ENCODE measurements at regions of chr13 and their contacts with region 1.

Region 1: GRCh38 chr13:44435142-44435982 is 61.7 kb downstream of the SERP2 start:
- DNase-seq: peak; percentile 99
- H3K4me3 Mint-ChIP-seq: peak overlapping the region; percentile 92
- H3K27ac Mint-ChIP-seq: peak overlapping the region; percentile 96
- H3K4me1 Mint-ChIP-seq: peaks cover 41% of the 10 kb centered on the region
- H3K27me3 Mint-ChIP-seq: no peaks in the 10 kb centered on the region
- CTCF ChIP-seq: no peak

Region 2: DNA sequence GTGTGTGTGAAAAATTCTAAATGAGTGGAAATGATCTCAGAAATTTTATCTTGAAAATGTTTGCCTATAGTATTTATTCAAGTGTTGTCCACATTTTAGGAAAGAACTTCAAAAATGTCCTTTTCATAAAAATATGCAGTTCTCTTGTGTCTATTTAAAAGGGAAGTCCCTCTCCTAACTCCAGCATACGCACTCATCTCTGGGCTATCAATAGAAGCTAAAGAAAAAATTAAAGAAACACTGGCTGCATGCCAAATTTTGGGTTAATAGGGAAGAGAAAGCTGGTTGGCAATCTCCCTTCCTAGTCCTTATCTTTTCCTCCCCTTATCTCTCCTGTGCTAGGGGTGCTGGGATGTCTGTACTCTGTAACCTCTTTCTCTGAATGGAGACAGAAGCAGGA is 961.9 kb before region 1 on chr13:
- CTCF ChIA-PET with region 1: no interaction called
- POLR2A ChIA-PET with region 1: no interaction called
- intact Hi-C with region 1: no loop called
- DNase-seq: no peak
- H3K4me3 Mint-ChIP-seq: no peak overlapping the region
- H3K27ac Mint-ChIP-seq: no peak overlapping the region
- H3K4me1 Mint-ChIP-seq: no peaks in the 10 kb centered on the region
- H3K27me3 Mint-ChIP-seq: no peaks in the 10 kb centered on the region
- CTCF ChIP-seq: no peak

Region 3: GRCh38 chr13:44108331-44108858 is 327.0 kb before region 1 on chr13:
- CTCF ChIA-PET with region 1: no interaction called
- POLR2A ChIA-PET with region 1: interaction called, 23 read pairs
- intact Hi-C with region 1: no loop called
- DNase-seq: peak; percentile 51
- H3K4me3 Mint-ChIP-seq: no peak overlapping the region
- H3K27ac Mint-ChIP-seq: no peak overlapping the region
- H3K4me1 Mint-ChIP-seq: peaks cover 9% of the 10 kb centered on the region
- H3K27me3 Mint-ChIP-seq: no peaks in the 10 kb centered on the region
- CTCF ChIP-seq: no peak

Region 4: GRCh38 chr13:44191504-44192171 is 243.7 kb before region 1 on chr13:
- CTCF ChIA-PET with region 1: interaction called, 4 read pairs
- POLR2A ChIA-PET with region 1: interaction called, 20 read pairs
- intact Hi-C with region 1: loop called (anchors 1 kb)
- DNase-seq: peak; percentile 77
- H3K4me3 Mint-ChIP-seq: no peak overlapping the region
- H3K27ac Mint-ChIP-seq: peak overlapping the region; percentile 85
- H3K4me1 Mint-ChIP-seq: peaks cover 31% of the 10 kb centered on the region
- H3K27me3 Mint-ChIP-seq: no peaks in the 10 kb centered on the region
- CTCF ChIP-seq: peak; percentile 49

Region 5: DNA sequence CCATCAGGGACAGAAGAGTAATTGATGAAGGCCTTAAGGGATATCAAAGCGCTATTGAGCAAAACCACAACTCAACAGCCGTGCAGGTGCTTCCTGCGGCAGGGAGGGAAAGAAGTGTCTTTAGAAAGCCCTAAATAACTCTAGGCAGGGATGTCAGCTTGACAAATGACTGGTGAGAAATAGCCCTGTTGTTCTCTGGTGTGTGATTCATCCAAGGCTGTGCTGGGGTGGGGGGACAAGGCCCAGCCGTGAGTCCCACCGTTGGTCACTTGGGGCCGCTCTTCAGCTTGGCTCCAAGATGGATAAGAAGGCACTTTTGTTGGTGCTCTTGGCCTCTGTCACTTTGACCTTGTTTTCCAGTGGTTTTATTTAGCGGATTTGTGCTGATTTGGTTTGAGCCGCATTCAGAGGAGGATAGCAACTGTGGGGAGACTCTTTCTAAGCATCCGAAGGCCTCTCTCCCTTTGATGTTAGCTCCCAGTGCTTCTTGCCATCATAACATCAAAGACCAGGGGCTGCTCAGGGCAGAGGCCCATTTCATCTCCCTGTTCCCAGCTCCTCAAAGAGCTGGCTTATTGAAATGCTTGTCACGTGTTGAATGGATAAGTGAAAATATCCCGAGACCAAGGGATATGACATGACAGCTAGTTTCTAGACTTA is 192.0 kb before region 1 on chr13:
- CTCF ChIA-PET with region 1: interaction called, 25 read pairs
- POLR2A ChIA-PET with region 1: interaction called, 127 read pairs
- intact Hi-C with region 1: loop called (anchors 1 kb)
- DNase-seq: peak; percentile 97
- H3K4me3 Mint-ChIP-seq: no peak overlapping the region
- H3K27ac Mint-ChIP-seq: peak overlapping the region; percentile 81
- H3K4me1 Mint-ChIP-seq: peaks cover 29% of the 10 kb centered on the region
- H3K27me3 Mint-ChIP-seq: no peaks in the 10 kb centered on the region
- CTCF ChIP-seq: peak; percentile 71

Region 6: GRCh38 chr13:44306401-44307192 is 128.8 kb before region 1 on chr13:
- CTCF ChIA-PET with region 1: interaction called, 15 read pairs
- POLR2A ChIA-PET with region 1: interaction called, 341 read pairs
- intact Hi-C with region 1: no loop called
- DNase-seq: peak; percentile 99
- H3K4me3 Mint-ChIP-seq: peak overlapping the region; percentile 51
- H3K27ac Mint-ChIP-seq: peak overlapping the region; percentile 93
- H3K4me1 Mint-ChIP-seq: peaks cover 79% of the 10 kb centered on the region
- H3K27me3 Mint-ChIP-seq: no peaks in the 10 kb centered on the region
- CTCF ChIP-seq: no peak

Region 7: GRCh38 chr13:44470638-44471562 is 35.5 kb after region 1 on chr13:
- CTCF ChIA-PET with region 1: interaction called, 7 read pairs
- POLR2A ChIA-PET with region 1: interaction called, 6 read pairs
- intact Hi-C with region 1: loop called (anchors 2 kb)
- DNase-seq: peak; percentile 50
- H3K4me3 Mint-ChIP-seq: no peak overlapping the region
- H3K27ac Mint-ChIP-seq: no peak overlapping the region
- H3K4me1 Mint-ChIP-seq: peaks cover 6% of the 10 kb centered on the region
- H3K27me3 Mint-ChIP-seq: no peaks in the 10 kb centered on the region
- CTCF ChIP-seq: peak; percentile 58

Region 8: DNA sequence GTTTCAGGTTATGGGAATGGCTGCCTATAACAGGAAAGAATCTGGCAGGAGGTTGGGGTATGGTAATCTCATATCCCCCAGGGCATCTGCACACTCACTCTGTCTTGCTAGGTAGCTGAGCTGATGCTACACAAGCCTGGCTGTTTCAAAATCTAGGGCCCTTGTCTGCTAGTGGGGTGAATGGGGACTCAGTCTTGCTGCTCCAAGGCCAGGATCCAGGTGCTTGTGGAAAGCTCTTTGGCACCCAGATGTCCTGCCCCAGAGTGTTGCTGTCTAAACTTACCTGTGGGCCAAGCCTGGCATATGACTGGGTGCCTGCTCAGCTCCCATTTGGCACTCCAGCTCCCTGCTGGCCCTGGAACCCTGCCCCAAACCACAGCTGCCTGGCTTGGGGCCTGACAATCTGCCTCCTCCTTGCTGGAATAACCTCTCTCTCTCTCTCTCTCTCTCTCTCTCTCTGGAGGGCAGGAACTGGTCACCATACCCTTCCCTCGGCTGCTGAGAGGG is 298.9 kb after region 1 on chr13:
- CTCF ChIA-PET with region 1: no interaction called
- POLR2A ChIA-PET with region 1: no interaction called
- intact Hi-C with region 1: no loop called
- DNase-seq: peak; percentile 93
- H3K4me3 Mint-ChIP-seq: peak overlapping the region; percentile 14
- H3K27ac Mint-ChIP-seq: peak overlapping the region; percentile 78
- H3K4me1 Mint-ChIP-seq: peaks cover 20% of the 10 kb centered on the region
- H3K27me3 Mint-ChIP-seq: no peaks in the 10 kb centered on the region
- CTCF ChIP-seq: no peak

Measured in MCF 10A (cell line).